IMR-90 (cell line): ENCODE measurements at regions of chr2 and their contacts with region 1.

Region 1: DNA sequence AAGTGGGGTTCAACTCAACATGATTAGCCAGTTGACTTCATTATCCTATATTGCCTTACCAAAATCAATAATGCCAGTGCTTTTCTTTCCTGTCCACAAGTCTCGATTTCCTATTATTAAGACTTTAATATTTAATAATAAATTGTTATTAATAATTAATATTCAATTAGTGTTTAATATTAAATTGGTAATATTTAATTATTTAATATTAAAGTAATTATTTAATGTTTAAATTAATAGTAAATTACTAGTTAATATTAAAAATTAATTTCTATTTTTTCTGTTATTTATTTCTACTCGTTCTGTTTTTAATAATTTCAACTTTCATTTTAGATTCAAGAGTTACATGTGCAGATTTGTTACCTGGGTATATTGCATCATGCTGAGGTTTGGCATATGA is 243.2 kb downstream of the GULP1 start:
- DNase-seq: no peak
- ATAC-seq: no peak
- H3K4me3 ChIP-seq: no peak overlapping the region
- H3K27ac ChIP-seq: no peak overlapping the region
- H3K4me1 ChIP-seq: no peaks in the 10 kb centered on the region
- H3K27me3 ChIP-seq: no peaks in the 10 kb centered on the region
- CTCF ChIP-seq: no peak
- POLR2A ChIP-seq: no peak
- RAD21 ChIP-seq: no peak

Region 2: DNA sequence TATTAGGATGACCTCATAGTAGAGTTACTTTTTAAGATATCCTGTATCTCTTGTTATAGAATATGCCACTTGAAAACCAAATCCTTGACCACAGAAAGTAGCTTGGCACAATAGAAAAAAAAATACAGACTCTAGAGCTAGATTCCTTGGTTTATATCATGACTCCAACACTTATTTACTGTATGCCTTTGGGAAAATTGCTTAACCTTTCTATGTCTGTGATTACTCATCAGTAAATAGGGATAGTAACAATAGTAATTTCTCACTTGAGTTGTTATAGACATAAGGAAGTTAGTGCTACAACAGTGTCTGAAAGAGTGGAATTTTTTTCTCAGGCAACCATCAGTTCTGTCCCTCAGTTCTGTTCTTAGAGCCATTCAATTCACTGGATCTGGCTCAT is 49.4 kb before region 1 on chr2:
- CTCF ChIA-PET with region 1: no interaction called
- POLR2A ChIA-PET with region 1: no interaction called
- dilution Hi-C with region 1: no loop called
- in situ Hi-C with region 1: no loop called
- intact Hi-C with region 1: no loop called
- DNase-seq: peak; percentile 12
- ATAC-seq: peak; percentile 42
- H3K4me3 ChIP-seq: no peak overlapping the region
- H3K27ac ChIP-seq: no peak overlapping the region
- H3K4me1 ChIP-seq: no peaks in the 10 kb centered on the region; the same call in 1 of the 2 replicates
- H3K27me3 ChIP-seq: no peaks in the 10 kb centered on the region
- CTCF ChIP-seq: no peak
- POLR2A ChIP-seq: no peak
- RAD21 ChIP-seq: no peak

Region 3: DNA sequence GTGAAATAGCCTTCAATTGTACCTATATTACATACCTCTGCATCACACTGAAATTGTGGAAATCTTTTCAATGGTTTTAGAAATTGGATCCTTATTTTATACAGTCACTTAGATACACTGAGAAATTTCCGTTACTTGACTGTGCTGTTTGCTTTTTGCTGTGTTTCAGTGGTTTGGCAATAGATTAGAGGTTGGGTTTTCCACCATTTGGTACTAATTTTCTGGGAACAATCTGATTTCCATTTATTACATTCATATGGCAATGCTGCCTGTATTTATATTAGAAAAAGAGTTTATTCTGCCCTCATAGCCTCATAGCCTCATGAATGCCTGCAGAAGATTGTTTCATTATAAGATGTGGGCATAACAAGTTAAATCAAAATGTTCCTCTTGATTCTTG is 41.8 kb after region 1 on chr2:
- CTCF ChIA-PET with region 1: no interaction called
- POLR2A ChIA-PET with region 1: no interaction called
- dilution Hi-C with region 1: no loop called
- in situ Hi-C with region 1: no loop called
- intact Hi-C with region 1: loop called (anchors 5 kb)
- DNase-seq: no peak
- ATAC-seq: no peak
- H3K4me3 ChIP-seq: no peak overlapping the region
- H3K27ac ChIP-seq: no peak overlapping the region
- H3K4me1 ChIP-seq: no peaks in the 10 kb centered on the region
- H3K27me3 ChIP-seq: no peaks in the 10 kb centered on the region
- CTCF ChIP-seq: no peak
- POLR2A ChIP-seq: no peak
- RAD21 ChIP-seq: no peak